ENCODE measurements at regions of chr13 and their contacts with region 1.

Region 1: GRCh38 chr13:33139184-33139583 is 123.0 kb downstream of the KL start:
- DNase-seq: peak; percentile 43 to 56
- ATAC-seq: peak; percentile 71 to 94 (median 84)
- H3K4me3 ChIP-seq: no peak overlapping the region
- H3K27ac ChIP-seq: peak overlapping the region; percentile 48
- H3K4me1 ChIP-seq: peaks cover 37% of the 10 kb centered on the region
- H3K27me3 ChIP-seq: no peaks in the 10 kb centered on the region
- CTCF ChIP-seq: no peak

Region 2: DNA sequence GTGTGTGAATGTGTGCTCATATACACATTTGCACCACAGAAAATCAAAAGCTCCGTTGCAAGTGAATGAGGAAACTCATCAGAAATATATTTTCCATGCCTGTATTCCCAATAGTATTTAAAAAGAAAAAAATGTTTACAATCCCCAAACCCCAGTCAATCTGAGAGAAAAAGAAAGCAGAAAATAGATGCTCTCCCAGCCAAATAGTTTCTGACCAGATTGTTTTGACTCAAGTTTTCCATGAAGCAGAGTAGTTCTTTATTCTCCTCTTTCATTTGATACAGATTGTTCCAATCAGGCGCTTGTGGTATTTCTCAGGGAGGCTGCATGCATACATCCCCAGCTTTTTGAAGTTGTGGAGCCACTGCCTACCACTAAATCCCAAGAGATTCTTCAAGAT is 35.7 kb after region 1 on chr13:
- intact Hi-C with region 1: loop called in 1 of 2 experiments (anchors 5 kb)
- DNase-seq: no peak
- ATAC-seq: no peak
- H3K4me3 ChIP-seq: no peak overlapping the region
- H3K27ac ChIP-seq: no peak overlapping the region
- H3K4me1 ChIP-seq: peaks cover 30% of the 10 kb centered on the region
- H3K27me3 ChIP-seq: no peaks in the 10 kb centered on the region
- CTCF ChIP-seq: no peak

Measured in psoas muscle (tissue), 8 donors.